ENCODE measurements at regions of chr4 and their contacts with region 1.

Region 1: DNA sequence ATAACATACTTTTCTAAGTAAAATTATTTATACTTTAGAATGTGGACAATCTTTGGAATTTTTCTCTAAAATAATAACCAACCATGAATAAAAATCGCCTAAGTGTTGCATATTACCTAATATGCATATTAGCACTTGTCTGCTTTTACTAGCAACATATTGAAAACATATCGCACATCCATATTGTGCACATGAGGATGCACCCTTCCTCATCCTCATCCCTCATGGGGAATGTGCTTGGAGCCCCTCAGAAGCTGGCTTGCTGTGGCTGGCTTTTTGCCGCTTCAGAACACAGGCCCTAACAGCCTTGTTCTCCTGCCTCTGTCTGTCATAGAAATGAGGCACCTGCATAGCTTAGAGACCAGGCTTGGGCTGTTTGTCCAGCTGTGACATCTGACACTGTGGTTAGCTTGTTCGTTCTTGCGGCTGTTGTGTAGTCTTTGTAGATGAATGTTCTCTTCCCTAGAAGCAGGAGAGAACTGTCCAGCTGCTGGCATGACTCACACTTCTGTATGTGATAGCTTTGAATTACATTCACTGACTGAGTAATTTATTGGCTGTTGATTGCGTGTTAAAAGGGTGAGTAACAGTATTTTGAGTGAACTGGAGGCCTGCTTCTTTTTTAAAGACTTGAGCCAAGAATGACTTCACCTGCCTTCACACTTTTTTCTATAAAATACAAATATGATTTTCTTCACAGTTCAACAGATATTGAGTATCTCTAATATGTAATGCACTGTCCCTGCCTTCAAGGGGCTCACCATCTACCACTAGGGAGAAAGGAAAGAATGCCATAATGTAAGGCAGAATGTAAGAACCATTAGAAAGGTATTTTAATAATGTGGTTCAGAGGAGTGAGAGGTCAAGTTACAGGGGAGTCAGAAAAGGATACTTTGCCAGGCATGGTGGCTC is 81.9 kb downstream of the HMGB2 start:
- DNase-seq: peak; percentile 79 to 81
- ATAC-seq: peak; percentile 100
- H3K4me3 ChIP-seq: no peak overlapping the region
- H3K27ac ChIP-seq: peak overlapping the region in 3 of 4 donors; percentile 48 to 70 (median 58)
- H3K4me1 ChIP-seq: peaks cover 4 to 7% of the 10 kb centered on the region in 2 donors
- H3K27me3 ChIP-seq: no peaks in the 10 kb centered on the region
- CTCF ChIP-seq: no peak
- POLR2A ChIP-seq: no peak

Region 2: DNA sequence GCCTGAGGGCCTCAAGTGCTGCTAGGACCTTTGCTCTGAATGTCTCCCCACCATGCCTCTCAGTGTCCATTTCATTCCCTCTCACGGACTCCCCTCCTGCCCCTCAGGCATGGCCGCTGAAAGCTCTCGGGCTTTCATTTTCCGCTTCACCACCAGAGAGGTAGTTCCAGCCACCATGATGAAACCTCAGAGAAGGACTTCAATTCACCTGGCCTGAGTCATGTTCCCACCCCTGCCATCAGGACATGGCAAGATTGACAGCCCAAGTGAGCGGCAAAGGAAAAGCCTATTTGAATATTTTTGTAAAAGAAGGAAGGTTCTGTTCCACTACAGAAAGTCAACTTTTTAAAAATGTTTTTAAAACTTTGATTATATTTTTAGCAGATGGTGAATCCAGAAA is 333.0 kb before region 1 on chr4:
- in situ Hi-C with region 1: no loop called
- intact Hi-C with region 1: no loop called
- DNase-seq: no peak
- ATAC-seq: no peak
- H3K4me3 ChIP-seq: no peak overlapping the region
- H3K27ac ChIP-seq: no peak overlapping the region
- H3K4me1 ChIP-seq: no peaks in the 10 kb centered on the region
- H3K27me3 ChIP-seq: no peaks in the 10 kb centered on the region
- CTCF ChIP-seq: no peak
- POLR2A ChIP-seq: no peak

Region 3: DNA sequence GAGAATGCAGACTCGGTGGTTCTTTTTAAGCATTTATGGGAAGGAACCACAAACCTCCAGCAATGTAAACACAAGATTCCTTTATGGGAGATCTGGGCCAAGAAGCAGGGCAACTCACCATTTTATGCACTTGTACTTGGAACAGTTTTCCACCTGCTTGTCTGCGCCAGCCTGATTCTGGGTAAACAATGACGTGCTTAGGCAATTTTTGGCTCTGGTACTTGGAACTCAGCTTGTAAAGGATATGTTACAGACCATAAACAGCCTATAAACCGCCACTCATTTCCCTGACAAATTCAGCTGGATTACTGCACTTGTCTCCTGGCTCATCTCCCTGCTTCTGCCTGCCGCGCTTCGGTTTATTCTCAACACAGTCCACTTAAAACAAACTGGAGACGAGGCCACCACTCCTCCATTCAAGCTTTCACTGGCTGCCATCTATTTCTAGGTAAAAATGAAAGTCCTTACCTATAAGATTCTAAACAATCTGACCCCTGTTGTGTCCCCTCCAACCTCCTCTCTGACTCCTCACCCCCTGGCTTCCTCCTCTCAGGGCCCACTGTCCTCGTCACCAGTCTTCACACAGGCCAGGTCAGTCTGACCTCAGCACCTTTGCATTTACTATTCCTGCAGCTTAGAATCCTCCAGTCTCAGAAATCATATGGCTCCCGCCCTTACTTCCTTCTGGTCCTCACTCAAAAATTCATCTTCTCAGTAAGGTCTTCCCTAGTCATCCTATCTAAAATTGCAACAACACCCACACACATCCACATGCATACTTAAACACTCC is 289.5 kb before region 1 on chr4:
- in situ Hi-C with region 1: no loop called
- intact Hi-C with region 1: loop called (anchors 5 kb)
- DNase-seq: peak in 1 of 2 donors; percentile 12
- ATAC-seq: peak; percentile 44 to 99
- H3K4me3 ChIP-seq: no peak overlapping the region
- H3K27ac ChIP-seq: no peak overlapping the region
- H3K4me1 ChIP-seq: peaks cover 7 to 11% of the 10 kb centered on the region in 2 donors
- H3K27me3 ChIP-seq: no peaks in the 10 kb centered on the region
- CTCF ChIP-seq: no peak
- POLR2A ChIP-seq: no peak